GM12878 (cell line): ENCODE measurements at regions of chr7 and their contacts with region 1.

Region 1: DNA sequence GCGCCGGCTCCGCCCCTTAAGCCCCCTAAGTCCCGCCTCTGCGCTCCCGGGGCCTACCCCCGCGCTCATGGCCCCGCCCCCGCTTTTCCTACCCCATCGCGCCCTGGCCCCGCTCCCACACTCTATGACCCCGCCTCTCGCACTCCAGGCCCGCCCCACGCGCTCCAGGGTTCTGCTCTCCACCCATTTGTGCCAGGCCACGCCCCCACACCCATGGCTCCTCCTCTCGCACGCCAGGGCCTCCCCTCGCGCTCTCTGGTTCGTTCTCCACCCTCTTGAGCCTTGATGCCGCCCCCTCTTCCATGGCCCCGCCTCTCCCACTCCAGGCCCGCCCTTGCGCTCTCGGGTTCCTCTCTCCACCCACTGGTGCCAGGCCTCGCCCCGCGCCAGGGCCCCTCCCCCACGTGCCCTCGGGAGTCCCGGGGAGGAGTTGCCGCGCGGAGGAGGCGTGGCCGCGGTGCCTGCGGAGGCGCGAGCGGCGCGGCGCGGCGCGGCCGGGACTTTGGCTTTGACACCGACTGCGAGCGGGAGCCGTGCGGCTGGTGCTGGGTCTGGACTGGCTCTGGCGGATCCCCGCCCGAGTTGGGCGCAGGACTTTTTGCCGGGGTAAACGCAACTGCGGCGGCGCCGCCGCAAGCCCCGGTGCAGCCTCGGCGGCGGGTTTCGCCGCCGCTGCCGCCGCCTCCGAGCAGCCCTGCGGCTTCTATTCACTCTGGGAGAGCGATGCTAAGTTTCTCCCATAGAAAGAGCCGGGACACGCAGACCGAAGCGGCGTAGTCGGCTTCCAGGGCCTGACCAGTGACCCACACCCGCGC is at the start of gene EEPD1:
- DNase-seq: peak; percentile 87
- ATAC-seq: peak; percentile 97
- H3K4me3 ChIP-seq: peak within 1 kb of the TSS; percentile 76
- H3K27ac ChIP-seq: no peak within 1 kb of the TSS
- H3K4me1 ChIP-seq: peaks cover 3% of the 10 kb centered on the region
- H3K27me3 ChIP-seq: peaks cover 0 to 2% of the 10 kb centered on the region in 2 experiments; a peak in 2 of 4 replicates
- CTCF ChIP-seq: no peak
- EP300 ChIP-seq: no peak
- POLR2A ChIP-seq: peak; percentile 40; the same call in 1 of the 2 replicates
- RAD21 ChIP-seq: no peak
- polyA plus RNA-seq, gene EEPD1: 0.24 TPM in 1 of 2 experiments, not detected in the other

Region 2: DNA sequence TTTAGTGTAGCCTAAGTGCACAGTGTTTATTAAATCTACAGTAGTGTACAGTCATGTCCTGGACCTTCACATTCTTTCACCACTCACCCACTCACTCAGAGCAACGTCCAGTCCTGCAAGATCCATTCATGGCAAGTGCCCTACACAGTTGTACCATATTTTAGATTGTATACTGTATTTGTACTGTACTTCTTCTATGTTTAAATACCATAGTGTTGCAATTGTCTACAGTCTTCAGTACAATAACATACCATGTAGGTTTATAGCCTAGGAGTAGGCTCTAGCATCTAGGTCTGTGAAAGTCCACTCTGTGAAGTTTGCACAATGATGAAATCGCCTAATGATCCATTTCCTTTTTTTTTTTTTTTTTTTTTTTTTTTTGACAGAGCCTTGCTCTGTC is 12.1 kb after region 1 on chr7:
- CTCF ChIA-PET with region 1: interaction called, 3 read pairs
- POLR2A ChIA-PET with region 1: interaction called, 11 read pairs
- RAD21 ChIA-PET with region 1: no interaction called
- SMC1A ChIA-PET with region 1: interaction called, 21 read pairs
- in situ Hi-C with region 1: no loop called
- intact Hi-C with region 1: no loop called
- DNase-seq: no peak
- ATAC-seq: peak; percentile 6; the same call in 2 of the 3 replicates
- H3K4me3 ChIP-seq: no peak overlapping the region
- H3K27ac ChIP-seq: no peak overlapping the region
- H3K4me1 ChIP-seq: no peaks in the 10 kb centered on the region
- H3K27me3 ChIP-seq: no peaks in the 10 kb centered on the region
- CTCF ChIP-seq: no peak
- EP300 ChIP-seq: no peak
- POLR2A ChIP-seq: no peak
- RAD21 ChIP-seq: no peak

Region 3: DNA sequence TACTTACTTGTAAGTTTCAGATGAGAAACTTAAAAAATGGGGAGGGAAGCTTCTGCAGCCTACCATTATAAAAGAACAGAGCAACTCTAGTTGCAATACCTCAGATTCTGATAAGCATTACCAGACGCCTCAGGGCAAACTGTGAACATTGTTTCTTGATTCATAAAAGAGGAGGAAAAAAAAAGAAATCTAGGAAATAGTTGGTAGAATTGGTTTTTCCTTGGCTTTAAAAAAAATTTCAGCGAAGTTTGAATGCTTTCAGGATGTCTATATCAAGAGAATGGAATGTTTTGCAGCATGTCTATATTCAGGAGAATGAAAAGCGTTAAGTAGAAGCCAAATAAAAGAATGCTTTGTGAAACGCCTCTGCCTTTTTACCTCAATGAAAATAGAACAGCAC is 219.2 kb after region 1 on chr7:
- CTCF ChIA-PET with region 1: no interaction called
- POLR2A ChIA-PET with region 1: no interaction called
- RAD21 ChIA-PET with region 1: no interaction called
- SMC1A ChIA-PET with region 1: no interaction called
- in situ Hi-C with region 1: no loop called
- intact Hi-C with region 1: no loop called
- DNase-seq: no peak
- ATAC-seq: no peak
- H3K4me3 ChIP-seq: no peak overlapping the region
- H3K27ac ChIP-seq: no peak overlapping the region
- H3K4me1 ChIP-seq: no peaks in the 10 kb centered on the region
- H3K27me3 ChIP-seq: no peaks in the 10 kb centered on the region; a peak in 1 of 4 replicates
- CTCF ChIP-seq: no peak
- EP300 ChIP-seq: no peak
- POLR2A ChIP-seq: no peak
- RAD21 ChIP-seq: no peak

Region 4: GRCh38 chr7:36423633-36424032 is 270.7 kb after region 1 on chr7:
- CTCF ChIA-PET with region 1: no interaction called
- POLR2A ChIA-PET with region 1: no interaction called
- RAD21 ChIA-PET with region 1: no interaction called
- SMC1A ChIA-PET with region 1: no interaction called
- in situ Hi-C with region 1: no loop called
- intact Hi-C with region 1: no loop called
- DNase-seq: no peak
- ATAC-seq: no peak
- H3K4me3 ChIP-seq: no peak overlapping the region
- H3K27ac ChIP-seq: no peak overlapping the region
- H3K4me1 ChIP-seq: no peaks in the 10 kb centered on the region
- H3K27me3 ChIP-seq: no peaks in the 10 kb centered on the region
- CTCF ChIP-seq: no peak
- EP300 ChIP-seq: no peak
- POLR2A ChIP-seq: no peak
- RAD21 ChIP-seq: no peak